HAP-1 (cell line): ENCODE measurements at regions of chr3 and their contacts with region 1.

Region 1: GRCh38 chr3:158918008-158918407 is 116.2 kb downstream of the MFSD1 start:
- DNase-seq: peak; percentile 63 to 75
- H3K4me3 ChIP-seq: no peak overlapping the region
- H3K4me1 ChIP-seq: no peaks in the 10 kb centered on the region
- H3K27me3 ChIP-seq: no peaks in the 10 kb centered on the region

Region 2: DNA sequence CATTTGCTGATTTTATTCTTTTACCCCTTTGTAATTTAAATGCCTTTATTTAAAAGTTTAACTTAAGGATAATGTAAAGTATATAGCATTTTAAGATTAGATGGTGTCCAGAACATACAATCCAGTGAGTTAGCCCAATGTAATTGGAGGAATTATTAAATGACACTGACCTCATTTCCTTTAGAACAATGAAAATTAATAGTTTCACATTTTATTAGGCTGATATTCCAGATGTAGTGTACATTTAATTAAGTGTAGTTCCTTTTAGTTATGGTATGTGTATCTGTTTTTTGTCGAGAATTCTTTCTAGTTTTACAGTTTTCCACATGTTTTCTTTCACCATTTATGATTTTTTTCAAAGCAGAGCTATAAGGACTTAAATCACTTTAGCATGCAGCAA is 732.3 kb before region 1 on chr3:
- in situ Hi-C with region 1: no loop called
- DNase-seq: no peak
- H3K4me3 ChIP-seq: no peak overlapping the region
- H3K4me1 ChIP-seq: no peaks in the 10 kb centered on the region
- H3K27me3 ChIP-seq: no peaks in the 10 kb centered on the region

Region 3: DNA sequence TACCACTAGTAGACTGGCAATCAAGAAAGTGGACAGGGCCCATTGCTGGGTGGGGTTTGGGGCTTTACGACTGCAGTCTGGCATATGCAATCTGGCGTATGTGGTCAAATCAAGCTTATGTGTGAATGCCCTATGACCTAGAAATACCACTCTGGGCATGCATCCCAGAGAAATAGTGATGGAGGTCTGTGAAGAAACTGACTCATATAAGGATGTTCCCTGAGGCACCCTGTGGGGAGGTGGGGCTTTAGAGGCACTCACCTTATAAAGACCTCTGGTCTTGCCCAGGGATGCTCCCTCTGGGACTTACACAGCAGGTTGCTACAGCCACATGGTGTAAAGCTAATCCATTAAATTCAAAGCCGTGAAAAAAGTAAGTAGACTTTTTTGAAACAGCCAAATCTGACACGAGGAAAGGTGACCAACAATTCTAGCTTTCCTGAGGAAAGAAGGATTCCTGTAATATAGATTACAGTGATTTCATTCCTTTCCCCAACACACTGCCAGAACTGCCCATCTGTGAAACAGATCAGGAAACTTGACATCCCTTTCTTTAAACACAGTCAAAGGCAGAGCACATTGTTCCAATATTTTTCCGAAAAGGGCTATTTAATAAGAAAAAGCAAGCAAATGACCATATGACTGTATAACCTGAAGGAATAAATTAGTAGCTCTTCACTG is 199.4 kb before region 1 on chr3:
- in situ Hi-C with region 1: no loop called
- DNase-seq: no peak
- H3K4me3 ChIP-seq: no peak overlapping the region
- H3K4me1 ChIP-seq: peaks cover 11% of the 10 kb centered on the region
- H3K27me3 ChIP-seq: no peaks in the 10 kb centered on the region

Region 4: DNA sequence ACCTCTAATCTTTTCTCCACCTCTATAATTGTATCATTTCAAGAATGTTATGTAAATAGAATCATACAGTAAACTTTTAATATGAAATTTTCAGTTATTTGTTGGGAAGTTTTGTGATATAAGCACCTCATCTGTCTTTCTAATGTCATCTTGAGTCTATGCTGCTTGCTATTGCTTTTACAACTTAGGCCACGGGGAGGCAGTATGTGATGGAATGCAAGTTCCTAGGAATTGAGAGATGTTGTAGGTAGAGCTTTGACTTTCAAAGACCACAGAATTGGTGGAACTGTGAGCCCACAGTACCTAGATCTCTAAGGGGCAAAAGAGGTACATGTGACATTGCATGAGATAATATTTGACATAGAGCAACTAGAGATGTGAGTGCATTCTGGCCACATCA is 212.1 kb after region 1 on chr3:
- in situ Hi-C with region 1: loop called (anchors 25 kb)
- DNase-seq: peak in 1 of 2 experiments; percentile 67
- H3K4me3 ChIP-seq: no peak overlapping the region
- H3K4me1 ChIP-seq: no peaks in the 10 kb centered on the region
- H3K27me3 ChIP-seq: peaks cover 2% of the 10 kb centered on the region; the same call in 1 of the 2 replicates

Region 5: GRCh38 chr3:159252772-159253384 is 334.9 kb after region 1 on chr3:
- in situ Hi-C with region 1: loop called (anchors 10 kb)
- DNase-seq: peak; percentile 29 to 50
- H3K4me3 ChIP-seq: no peak overlapping the region
- H3K4me1 ChIP-seq: no peaks in the 10 kb centered on the region
- H3K27me3 ChIP-seq: peaks cover 10% of the 10 kb centered on the region